ENCODE measurements at regions of chr11 and their contacts with region 1.

Region 1: DNA sequence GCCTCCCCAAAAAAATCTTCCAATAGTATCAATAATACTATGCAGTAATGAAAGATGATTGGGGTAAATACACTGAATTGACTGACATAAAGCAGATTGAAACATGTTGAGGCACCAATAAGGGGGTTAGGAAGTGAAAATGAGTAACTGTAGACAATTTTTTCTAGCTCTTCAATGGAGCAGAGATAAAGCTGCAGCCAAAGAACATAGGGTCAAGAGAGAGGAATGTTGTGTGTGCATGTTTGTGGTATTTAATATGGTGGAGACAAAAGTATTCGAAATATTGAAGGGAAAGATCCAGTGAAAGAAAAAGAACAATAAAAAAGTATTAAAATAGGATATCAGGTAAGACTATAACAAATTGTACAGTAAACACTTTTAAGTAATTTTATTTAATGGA is 450.0 kb upstream of the CCDC179 start:
- DNase-seq: no peak
- H3K4me3 ChIP-seq: no peak overlapping the region
- H3K27ac ChIP-seq: no peak overlapping the region
- H3K4me1 ChIP-seq: peaks cover 28% of the 10 kb centered on the region
- H3K27me3 ChIP-seq: no peaks in the 10 kb centered on the region
- CTCF ChIP-seq: no peak
- POLR2A ChIP-seq: no peak

Region 2: DNA sequence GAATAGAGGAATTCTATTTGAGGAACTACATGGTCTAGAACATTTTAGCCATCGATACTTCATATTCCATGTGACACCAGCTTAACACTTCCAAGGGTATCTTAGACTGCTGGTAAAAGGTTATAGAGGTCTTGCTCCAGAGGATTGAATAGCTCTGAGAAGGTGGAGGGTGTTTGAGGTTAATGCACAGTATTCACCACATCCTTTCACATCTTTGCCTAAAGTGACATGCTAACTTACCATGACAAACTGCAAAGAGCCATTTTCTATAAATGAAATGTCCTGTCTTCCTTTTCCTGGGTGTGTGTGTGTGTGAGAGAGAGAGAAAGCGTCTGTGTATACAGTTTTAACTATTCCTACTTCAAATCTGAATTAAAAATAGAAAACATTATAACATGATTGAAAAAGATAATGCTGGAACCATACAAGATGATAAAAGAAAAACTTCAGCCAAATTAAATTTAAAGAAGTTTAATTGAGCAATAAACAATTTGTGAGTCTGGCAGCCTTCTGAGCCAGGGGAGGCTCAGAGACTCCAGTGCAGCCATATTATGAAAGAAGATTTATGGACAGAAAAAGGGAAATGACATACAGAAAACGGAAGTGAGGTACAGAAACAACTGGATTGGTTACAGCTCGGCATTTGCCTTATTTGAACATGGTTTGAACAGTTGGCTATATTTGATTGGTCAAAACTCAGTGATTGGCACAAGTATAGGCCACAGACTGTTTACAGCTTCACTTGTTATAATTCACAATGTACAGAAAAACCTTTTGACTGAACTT is 129.1 kb before region 1 on chr11:
- CTCF ChIA-PET with region 1: no interaction called
- POLR2A ChIA-PET with region 1: no interaction called
- dilution Hi-C with region 1: no loop called
- intact Hi-C with region 1: no loop called
- DNase-seq: no peak
- H3K4me3 ChIP-seq: no peak overlapping the region
- H3K27ac ChIP-seq: no peak overlapping the region
- H3K4me1 ChIP-seq: no peaks in the 10 kb centered on the region
- H3K27me3 ChIP-seq: no peaks in the 10 kb centered on the region
- CTCF ChIP-seq: no peak
- POLR2A ChIP-seq: no peak

Region 3: GRCh38 chr11:23205156-23205871 is 105.0 kb before region 1 on chr11:
- CTCF ChIA-PET with region 1: interaction called, 3 read pairs
- POLR2A ChIA-PET with region 1: no interaction called
- dilution Hi-C with region 1: no loop called
- intact Hi-C with region 1: loop called (anchors 1 kb)
- DNase-seq: peak; percentile 90
- H3K4me3 ChIP-seq: no peak overlapping the region
- H3K27ac ChIP-seq: peak overlapping the region; percentile 95
- H3K4me1 ChIP-seq: peaks cover 33% of the 10 kb centered on the region
- H3K27me3 ChIP-seq: no peaks in the 10 kb centered on the region
- CTCF ChIP-seq: no peak
- POLR2A ChIP-seq: no peak

Region 4: DNA sequence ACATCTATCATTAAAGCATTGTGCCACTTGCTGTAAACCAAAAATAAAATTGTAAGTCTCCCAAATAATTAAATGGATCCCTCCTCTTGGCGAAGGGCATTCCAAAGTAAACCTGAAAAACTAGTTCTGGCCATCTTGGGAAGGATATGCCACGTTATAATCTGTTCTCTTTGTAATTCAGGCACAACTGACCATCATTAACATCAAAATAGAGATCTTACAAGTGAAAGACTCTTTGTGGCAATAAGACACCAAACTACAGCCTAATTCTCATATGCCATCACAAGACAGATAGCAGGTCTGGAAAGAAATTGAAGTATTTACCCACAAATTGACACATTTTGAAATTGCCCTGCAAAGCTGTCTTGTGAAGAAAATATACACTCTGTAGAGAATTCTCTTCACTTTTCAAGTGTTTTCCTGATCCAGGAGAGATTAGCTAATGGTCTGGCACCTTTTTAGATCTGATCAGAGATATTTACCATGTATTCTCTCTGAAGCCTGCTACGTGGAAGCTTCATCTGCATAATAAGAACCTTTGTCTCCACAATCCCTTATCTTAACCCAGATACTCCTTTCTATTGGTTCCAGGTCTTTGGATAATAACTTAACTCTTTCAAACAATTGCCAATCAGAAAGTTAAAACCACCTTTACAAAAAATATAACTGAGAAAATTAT is 180.4 kb after region 1 on chr11:
- CTCF ChIA-PET with region 1: no interaction called
- POLR2A ChIA-PET with region 1: interaction called, 11 read pairs
- dilution Hi-C with region 1: no loop called
- intact Hi-C with region 1: no loop called
- DNase-seq: no peak
- H3K4me3 ChIP-seq: no peak overlapping the region
- H3K27ac ChIP-seq: no peak overlapping the region
- H3K4me1 ChIP-seq: no peaks in the 10 kb centered on the region
- H3K27me3 ChIP-seq: peaks cover 0 to 2% of the 10 kb centered on the region in 2 experiments
- CTCF ChIP-seq: no peak
- POLR2A ChIP-seq: no peak